Mammary epithelial cell (primary cell): ENCODE measurements at regions of chr12 and their contacts with region 1.

Region 1: DNA sequence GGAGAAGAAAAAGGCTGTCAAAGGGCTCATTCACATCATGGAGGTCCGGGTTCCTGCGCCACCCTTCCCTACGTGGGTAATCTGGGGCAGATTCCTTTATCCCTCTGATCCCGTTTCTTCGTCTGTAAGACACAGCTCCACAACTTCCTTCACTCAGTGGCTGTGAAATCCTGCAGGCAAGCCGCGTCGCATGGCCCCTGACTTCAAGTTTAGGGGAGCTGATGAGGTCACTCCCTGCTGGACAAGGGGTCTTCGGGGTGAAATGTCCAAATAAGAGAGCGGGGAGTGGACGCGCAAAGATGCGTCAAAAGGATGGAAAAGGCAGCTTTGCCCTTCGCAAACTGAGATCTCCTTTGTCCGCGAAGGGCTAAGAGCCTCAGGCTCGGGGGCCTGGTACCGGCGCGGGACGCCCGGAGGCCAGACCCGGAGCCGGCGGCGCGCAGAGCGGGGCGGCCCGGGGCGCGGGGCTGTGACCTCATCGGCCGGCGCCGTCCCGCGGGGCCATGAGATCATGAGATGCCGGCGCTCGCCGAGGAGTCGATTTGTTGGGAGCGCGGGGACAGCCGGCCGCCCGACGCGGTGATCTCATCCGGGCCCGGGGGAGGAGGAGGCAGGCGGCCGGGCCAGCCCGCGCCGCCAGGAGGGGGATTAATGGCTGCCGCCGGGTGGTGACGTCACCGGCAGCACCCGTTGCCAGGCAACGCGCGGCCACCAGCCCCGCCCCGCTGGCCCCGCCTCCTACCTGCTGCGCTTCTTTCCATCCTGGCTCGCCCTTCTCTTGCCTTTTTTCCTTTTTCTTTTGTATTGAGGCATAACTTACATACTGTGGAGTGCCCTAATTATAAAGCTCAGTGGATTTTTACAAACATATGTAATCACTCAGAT is 62.1 kb downstream of the HRK start:
- DNase-seq: peak; percentile 90
- H3K4me3 ChIP-seq: peak overlapping the region; percentile 49 to 73 (median 61)
- H3K27ac ChIP-seq: peak overlapping the region; percentile 47
- H3K4me1 ChIP-seq: peaks cover 5% of the 10 kb centered on the region
- H3K27me3 ChIP-seq: no peaks in the 10 kb centered on the region
- CTCF ChIP-seq: no peak

Region 2: GRCh38 chr12:116737774-116738700 is 81.2 kb before region 1 on chr12 and contains the starts of genes RNFT2 and SPRING1:
- CTCF ChIA-PET with region 1: no interaction called
- dilution Hi-C with region 1: no loop called
- in situ Hi-C with region 1: no loop called
- intact Hi-C with region 1: loop called (anchors 1 kb)
- DNase-seq: peak; percentile 99
- H3K4me3 ChIP-seq: peak within 1 kb of the TSS; percentile 63 to 94 (median 80)
- H3K27ac ChIP-seq: peak within 1 kb of the TSS; percentile 33
- H3K4me1 ChIP-seq: peaks cover 5% of the 10 kb centered on the region
- H3K27me3 ChIP-seq: no peaks in the 10 kb centered on the region
- CTCF ChIP-seq: no peak
- total RNA-seq, gene RNFT2: 2.0 to 3.0 TPM
- total RNA-seq, gene SPRING1: 31.2 to 45.0 TPM

Region 3: DNA sequence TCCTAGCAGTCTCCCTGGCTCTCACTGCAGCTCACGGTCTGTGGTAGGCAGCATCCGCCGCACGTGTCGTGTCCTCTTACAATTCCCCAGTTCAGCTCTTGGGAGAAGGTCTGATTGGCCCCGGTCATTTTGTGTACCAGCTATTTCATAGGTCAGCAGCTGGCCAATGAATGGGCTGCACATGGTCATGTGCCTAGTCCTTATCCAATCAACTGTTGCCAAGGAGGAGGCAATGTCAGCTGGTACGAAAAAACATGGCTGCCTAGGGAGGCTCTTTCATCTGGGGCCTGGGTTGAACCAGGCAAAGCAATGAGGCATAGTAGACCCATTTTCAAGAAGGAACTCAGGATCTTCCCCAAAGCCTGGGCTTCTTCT is 35.0 kb before region 1 on chr12:
- CTCF ChIA-PET with region 1: no interaction called
- dilution Hi-C with region 1: no loop called
- in situ Hi-C with region 1: no loop called
- intact Hi-C with region 1: no loop called
- DNase-seq: no peak
- H3K4me3 ChIP-seq: no peak overlapping the region
- H3K27ac ChIP-seq: no peak overlapping the region
- H3K4me1 ChIP-seq: no peaks in the 10 kb centered on the region
- H3K27me3 ChIP-seq: no peaks in the 10 kb centered on the region
- CTCF ChIP-seq: no peak

Region 4: GRCh38 chr12:116864371-116865160 is 45.4 kb after region 1 on chr12:
- CTCF ChIA-PET with region 1: no interaction called
- dilution Hi-C with region 1: no loop called
- in situ Hi-C with region 1: no loop called
- intact Hi-C with region 1: loop called (anchors 5 kb)
- DNase-seq: peak; percentile 64
- H3K4me3 ChIP-seq: no peak overlapping the region
- H3K27ac ChIP-seq: no peak overlapping the region
- H3K4me1 ChIP-seq: peaks cover 5% of the 10 kb centered on the region
- H3K27me3 ChIP-seq: peaks cover 7% of the 10 kb centered on the region
- CTCF ChIP-seq: no peak

Region 5: GRCh38 chr12:117119592-117120198 is 300.5 kb after region 1 on chr12:
- CTCF ChIA-PET with region 1: no interaction called
- dilution Hi-C with region 1: loop called (anchors 10 kb)
- in situ Hi-C with region 1: no loop called
- intact Hi-C with region 1: no loop called
- DNase-seq: no peak
- H3K4me3 ChIP-seq: no peak overlapping the region
- H3K27ac ChIP-seq: no peak overlapping the region
- H3K4me1 ChIP-seq: no peaks in the 10 kb centered on the region
- H3K27me3 ChIP-seq: no peaks in the 10 kb centered on the region
- CTCF ChIP-seq: peak; percentile 53 to 69